PC-9 (cell line): ENCODE measurements at regions of chr2 and their contacts with region 1.

Region 1: DNA sequence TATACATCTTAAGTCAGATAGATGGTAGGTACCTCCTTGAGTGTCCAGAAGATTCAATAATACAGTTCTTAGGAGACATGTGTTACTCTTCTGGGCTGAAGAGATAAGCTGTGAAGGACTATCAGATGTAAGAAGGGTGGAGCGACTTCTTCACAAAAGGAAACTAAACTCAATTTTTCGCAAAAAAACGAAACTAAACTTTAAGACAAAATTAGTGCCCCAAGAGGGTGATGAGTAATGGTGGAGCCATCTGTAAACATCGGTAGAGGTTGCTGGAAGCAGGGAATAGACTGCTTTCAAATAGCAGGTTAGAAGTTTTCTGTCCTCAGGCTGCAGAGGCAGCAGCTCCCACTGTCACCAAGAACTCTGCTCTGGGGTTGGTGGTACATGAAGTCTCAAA is 111.6 kb upstream of the TACR1 start:
- DNase-seq: peak in 1 of 2 experiments; percentile 1
- H3K4me3 ChIP-seq: no peak overlapping the region
- H3K27ac ChIP-seq: no peak overlapping the region
- H3K4me1 ChIP-seq: 0 out of 2 replicates have a peak, but pooled peaks cover 5% of the 10 kb centered on the region
- H3K27me3 ChIP-seq: no peaks in the 10 kb centered on the region
- CTCF ChIP-seq: no peak

Region 2: DNA sequence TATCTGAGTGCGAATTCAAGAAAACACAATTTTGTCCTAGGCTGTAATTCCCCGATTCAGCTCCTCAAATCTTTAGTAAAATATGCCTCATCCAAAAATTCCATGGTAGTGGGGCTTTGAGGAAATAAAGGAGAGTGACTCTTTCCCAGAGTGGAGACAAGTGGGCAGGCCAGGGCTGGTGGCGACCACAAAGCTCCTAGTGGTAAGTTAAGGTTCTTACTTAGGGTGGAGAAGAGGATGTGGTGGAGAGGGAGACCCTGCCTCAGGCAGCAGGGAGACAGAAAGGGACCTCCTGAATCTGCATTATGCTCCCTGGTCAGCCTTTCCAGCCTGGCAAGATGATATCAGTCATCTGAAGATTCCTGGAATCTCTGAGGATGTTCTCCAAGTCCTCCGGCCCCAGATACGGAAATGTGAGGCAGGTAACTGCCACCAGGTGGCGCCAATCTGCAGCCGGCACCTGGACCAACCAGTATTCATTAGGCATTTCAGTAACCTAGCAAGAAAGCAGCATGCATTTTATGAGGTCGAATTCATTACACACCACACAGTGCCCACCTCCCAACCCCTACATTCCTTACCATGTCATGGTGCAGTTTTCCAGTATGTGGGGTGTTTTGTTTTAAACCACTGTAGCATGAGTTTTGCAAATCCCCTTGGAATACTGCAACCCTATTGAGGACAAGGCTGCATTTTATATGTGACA is 246.0 kb before region 1 on chr2:
- CTCF ChIA-PET with region 1: no interaction called
- POLR2A ChIA-PET with region 1: no interaction called
- intact Hi-C with region 1: no loop called
- DNase-seq: peak; percentile 55
- H3K4me3 ChIP-seq: no peak overlapping the region
- H3K27ac ChIP-seq: no peak overlapping the region
- H3K4me1 ChIP-seq: no peaks in the 10 kb centered on the region
- H3K27me3 ChIP-seq: no peaks in the 10 kb centered on the region
- CTCF ChIP-seq: peak; percentile 94

Region 3: GRCh38 chr2:75290600-75291150 is 20.2 kb before region 1 on chr2:
- CTCF ChIA-PET with region 1: no interaction called
- POLR2A ChIA-PET with region 1: no interaction called
- intact Hi-C with region 1: no loop called
- DNase-seq: no peak
- H3K4me3 ChIP-seq: no peak overlapping the region
- H3K27ac ChIP-seq: no peak overlapping the region
- H3K4me1 ChIP-seq: no peaks in the 10 kb centered on the region
- H3K27me3 ChIP-seq: no peaks in the 10 kb centered on the region
- CTCF ChIP-seq: 0 out of 2 replicates have a peak, but pooled peaks have one; percentile 28

Region 4: GRCh38 chr2:75340560-75341330 is 29.9 kb after region 1 on chr2:
- CTCF ChIA-PET with region 1: interaction called, 11 read pairs
- POLR2A ChIA-PET with region 1: no interaction called
- intact Hi-C with region 1: no loop called
- DNase-seq: no peak
- H3K4me3 ChIP-seq: no peak overlapping the region
- H3K27ac ChIP-seq: no peak overlapping the region
- H3K4me1 ChIP-seq: no peaks in the 10 kb centered on the region
- H3K27me3 ChIP-seq: no peaks in the 10 kb centered on the region
- CTCF ChIP-seq: no peak